HepG2 (cell line): ENCODE measurements at regions of chr2 and their contacts with region 1.

Region 1: DNA sequence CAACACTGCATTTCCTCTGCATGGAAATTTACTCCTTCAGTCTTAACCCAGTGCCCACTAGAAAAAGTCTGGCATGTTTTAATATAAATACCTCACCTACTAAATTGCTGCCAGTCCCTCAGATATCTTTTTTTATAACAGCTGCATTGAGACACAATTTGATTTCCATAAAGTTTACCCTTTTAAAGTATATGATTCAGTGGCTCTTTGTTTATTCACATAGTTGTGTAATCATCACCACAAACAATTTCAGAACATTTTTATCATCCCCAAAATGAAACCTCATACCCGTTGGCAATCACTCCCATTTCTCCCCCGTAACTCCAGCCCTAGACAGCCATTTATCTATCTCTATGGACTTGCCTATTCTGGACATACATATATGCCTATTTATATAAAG is 17.0 kb upstream of the FRZB start:
- DNase-seq: no peak
- ATAC-seq: no peak
- H3K4me3 ChIP-seq: no peak overlapping the region
- H3K27ac ChIP-seq: no peak overlapping the region
- H3K4me1 ChIP-seq: no peaks in the 10 kb centered on the region
- H3K27me3 ChIP-seq: no peaks in the 10 kb centered on the region
- CTCF ChIP-seq: no peak
- EP300 ChIP-seq: no peak
- POLR2A ChIP-seq: no peak
- RAD21 ChIP-seq: no peak

Region 2: DNA sequence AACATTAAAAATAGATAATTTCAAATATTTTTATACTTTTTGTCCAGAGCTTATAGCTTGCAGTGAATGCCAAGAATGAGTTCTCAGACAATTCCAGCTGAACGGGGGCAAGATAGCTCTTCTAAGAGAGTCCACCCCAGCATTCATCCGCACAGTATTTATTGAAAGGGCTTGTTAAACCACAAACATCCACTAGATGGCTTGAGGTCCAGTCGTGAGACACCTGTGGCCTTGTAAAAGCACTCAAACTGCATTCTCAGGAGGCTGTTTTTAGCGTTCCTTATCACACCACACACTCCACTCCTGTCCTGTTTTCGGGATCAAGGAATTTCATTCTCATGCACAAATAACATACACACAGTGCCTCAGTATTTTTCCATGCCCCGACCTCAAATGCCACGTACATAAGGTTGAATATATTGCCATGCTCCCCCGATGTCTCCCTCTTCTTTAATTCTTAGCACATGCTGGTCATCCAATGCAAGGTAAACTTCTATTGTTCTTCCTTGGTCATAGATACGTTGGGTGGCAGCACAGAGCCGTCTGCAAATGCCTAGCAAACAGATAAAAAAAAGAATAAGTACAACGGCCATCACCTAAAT is 120.0 kb before region 1 on chr2:
- CTCF ChIA-PET with region 1: no interaction called
- POLR2A ChIA-PET with region 1: no interaction called
- in situ Hi-C with region 1: no loop called
- intact Hi-C with region 1: loop called (anchors 5 kb)
- DNase-seq: peak; percentile 62
- ATAC-seq: peak; percentile 84
- H3K4me3 ChIP-seq: no peak overlapping the region
- H3K27ac ChIP-seq: no peak overlapping the region
- H3K4me1 ChIP-seq: 0 out of 2 replicates have a peak, but pooled peaks cover 7% of the 10 kb centered on the region
- H3K27me3 ChIP-seq: no peaks in the 10 kb centered on the region
- CTCF ChIP-seq: peak; percentile 75
- EP300 ChIP-seq: no peak
- POLR2A ChIP-seq: no peak
- RAD21 ChIP-seq: 0 out of 2 replicates have a peak, but pooled peaks have one; percentile 27

Region 3: GRCh38 chr2:182897137-182897536 is 13.7 kb after region 1 on chr2:
- CTCF ChIA-PET with region 1: no interaction called
- POLR2A ChIA-PET with region 1: no interaction called
- in situ Hi-C with region 1: no loop called
- intact Hi-C with region 1: no loop called
- DNase-seq: no peak
- ATAC-seq: no peak
- H3K4me3 ChIP-seq: no peak overlapping the region
- H3K27ac ChIP-seq: no peak overlapping the region
- H3K4me1 ChIP-seq: peaks cover 12% of the 10 kb centered on the region
- H3K27me3 ChIP-seq: no peaks in the 10 kb centered on the region
- CTCF ChIP-seq: no peak
- EP300 ChIP-seq: no peak
- POLR2A ChIP-seq: no peak
- RAD21 ChIP-seq: no peak